ENCODE measurements at regions of chr3 and their contacts with region 1.

Region 1: DNA sequence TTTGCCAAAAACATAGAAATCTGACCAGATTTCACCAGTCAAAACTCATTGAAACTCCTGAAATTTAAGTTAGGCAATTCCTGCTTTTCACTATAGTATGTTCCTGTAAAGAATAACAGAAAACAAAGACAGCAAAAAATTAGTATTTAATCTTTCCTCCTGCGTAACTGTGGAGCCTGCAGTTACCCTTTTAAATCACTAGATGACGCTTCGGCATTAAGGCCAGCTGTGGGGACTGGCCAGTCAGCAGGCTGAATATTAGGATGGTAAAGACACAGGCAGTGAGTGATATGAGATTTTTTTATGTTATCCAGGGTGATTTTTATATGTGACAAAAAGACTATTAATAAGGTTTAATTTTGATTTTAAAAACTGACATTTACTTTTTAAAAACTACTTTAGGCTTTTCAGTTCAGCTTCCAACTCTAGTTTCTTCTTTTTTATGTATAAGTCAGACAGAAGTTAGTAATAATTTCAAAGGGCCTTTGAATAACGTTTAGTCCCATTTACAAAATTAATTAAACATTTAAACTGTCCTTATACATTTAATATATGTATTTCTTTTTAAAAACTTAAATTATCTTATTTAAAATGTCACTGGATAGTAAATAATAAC is 165.1 kb downstream of the PPM1L start:
- DNase-seq: peak in 1 of 2 donors; percentile 18
- ATAC-seq: peak in 7 of 8 donors; percentile 71 to 84 (median 78)
- H3K4me3 ChIP-seq: no peak overlapping the region
- H3K27ac ChIP-seq: no peak overlapping the region
- H3K4me1 ChIP-seq: peaks cover 0 to 45% (median 16%) of the 10 kb centered on the region in 9 donors
- H3K27me3 ChIP-seq: no peaks in the 10 kb centered on the region
- CTCF ChIP-seq: peak; percentile 46 to 91 (median 88)

Region 2: DNA sequence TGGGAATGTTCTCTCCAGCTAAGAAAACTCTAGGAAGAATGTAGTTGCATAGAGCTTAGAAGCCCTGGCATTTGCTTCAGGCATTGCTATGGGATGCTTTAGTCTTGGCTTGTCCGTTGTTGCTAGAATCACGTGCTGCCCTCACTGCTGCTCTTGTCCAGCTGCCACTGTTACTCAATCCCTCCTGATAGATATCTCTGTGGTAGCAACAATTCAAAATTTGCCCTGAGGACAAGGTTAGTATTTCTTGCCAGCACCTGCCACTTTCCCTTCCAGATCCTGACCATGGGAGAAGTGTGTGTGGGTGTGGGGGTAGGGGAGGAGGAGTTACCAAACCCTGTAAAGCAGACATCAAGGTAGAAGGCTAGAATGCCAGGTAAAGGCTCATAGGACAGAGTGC is 51.3 kb before region 1 on chr3:
- intact Hi-C with region 1: loop called in 1 of 10 experiments (anchors 2 kb)
- DNase-seq: peak; percentile 10 to 44
- ATAC-seq: peak; percentile 63 to 92 (median 87)
- H3K4me3 ChIP-seq: peak overlapping the region in 9 of 10 donors; percentile 6 to 44 (median 36)
- H3K27ac ChIP-seq: peak overlapping the region in 9 of 10 donors; percentile 54 to 75 (median 68)
- H3K4me1 ChIP-seq: peaks cover 0 to 28% (median 8%) of the 10 kb centered on the region in 9 donors
- H3K27me3 ChIP-seq: no peaks in the 10 kb centered on the region
- CTCF ChIP-seq: no peak

Region 3: DNA sequence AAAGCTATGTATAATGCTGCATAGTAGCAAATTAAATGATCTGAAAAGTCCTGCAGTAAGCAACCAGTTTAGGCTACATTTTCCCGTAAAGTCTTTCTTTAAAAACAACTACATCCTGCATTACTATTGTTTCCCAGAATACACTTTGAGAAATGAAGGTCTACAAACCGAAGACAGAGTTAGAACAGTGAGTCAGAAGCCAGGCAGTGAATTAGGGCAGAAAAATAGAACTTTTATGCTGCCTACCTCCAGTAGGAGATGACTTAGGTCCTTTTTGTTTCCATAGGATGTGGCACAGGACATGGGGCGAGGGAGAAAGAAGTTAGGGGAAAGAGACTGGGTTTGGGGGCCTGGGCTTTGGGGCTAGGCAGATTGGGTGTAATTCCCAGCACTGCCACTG is 37.8 kb before region 1 on chr3:
- intact Hi-C with region 1: loop called in 1 of 10 experiments (anchors 5 kb)
- DNase-seq: no peak
- ATAC-seq: no peak
- H3K4me3 ChIP-seq: no peak overlapping the region
- H3K27ac ChIP-seq: no peak overlapping the region
- H3K4me1 ChIP-seq: peaks cover 0 to 26% (median 3%) of the 10 kb centered on the region in 9 donors
- H3K27me3 ChIP-seq: no peaks in the 10 kb centered on the region
- CTCF ChIP-seq: no peak

Region 4: GRCh38 chr3:161409069-161409468 is 487.9 kb after region 1 on chr3:
- intact Hi-C with region 1: loop called in 1 of 10 experiments (anchors 10 kb)
- DNase-seq: peak in 1 of 2 donors; percentile 41
- ATAC-seq: peak in 3 of 8 donors; percentile 45 to 57 (median 53)
- H3K4me3 ChIP-seq: no peak overlapping the region
- H3K27ac ChIP-seq: no peak overlapping the region
- H3K4me1 ChIP-seq: peaks cover 0 to 23% (median 15%) of the 10 kb centered on the region in 9 donors
- H3K27me3 ChIP-seq: no peaks in the 10 kb centered on the region
- CTCF ChIP-seq: peak; percentile 16 to 66 (median 59)

Measured in heart right ventricle (tissue), 16 donors.